WTC11 (cell line): ENCODE measurements at regions of chr16 and their contacts with region 1.

Region 1: GRCh38 chr16:68528686-68529379 is 10.3 kb upstream of the ZFP90 start:
- DNase-seq: peak; percentile 91
- ATAC-seq: peak; percentile 81
- H3K4me3 Mint-ChIP-seq: peak overlapping the region; percentile 78
- H3K27ac Mint-ChIP-seq: no peak overlapping the region
- H3K4me1 Mint-ChIP-seq: peaks cover 15% of the 10 kb centered on the region
- H3K27me3 Mint-ChIP-seq: peaks cover 50% of the 10 kb centered on the region
- CTCF ChIP-seq: peak; percentile 98

Region 2: GRCh38 chr16:68538880-68539701 is 10.3 kb after region 1 on chr16 and contains the start of gene ZFP90:
- CTCF ChIA-PET with region 1: interaction called, 27 read pairs
- POLR2A ChIA-PET with region 1: interaction called, 5 read pairs
- DNase-seq: peak; percentile 93
- ATAC-seq: peak; percentile 95
- H3K4me3 Mint-ChIP-seq: peak within 1 kb of the TSS; percentile 91
- H3K27ac Mint-ChIP-seq: peak within 1 kb of the TSS; percentile 97
- H3K4me1 Mint-ChIP-seq: peaks cover 12% of the 10 kb centered on the region
- H3K27me3 Mint-ChIP-seq: no peaks in the 10 kb centered on the region; the same call in 1 of the 2 replicates
- CTCF ChIP-seq: no peak
- total RNA-seq, gene ZFP90: 21.7 to 24.9 TPM (median 22.6 TPM) in 3 replicates

Region 3: GRCh38 chr16:68644715-68645493 is 116.1 kb after region 1 on chr16 and contains the start of gene CDH3:
- CTCF ChIA-PET with region 1: interaction called, 16 read pairs
- POLR2A ChIA-PET with region 1: interaction called, 3 read pairs
- DNase-seq: peak; percentile 94
- ATAC-seq: peak; percentile 76
- H3K4me3 Mint-ChIP-seq: peak within 1 kb of the TSS; percentile 89
- H3K27ac Mint-ChIP-seq: peak within 1 kb of the TSS; percentile 96
- H3K4me1 Mint-ChIP-seq: peaks cover 48% of the 10 kb centered on the region
- H3K27me3 Mint-ChIP-seq: peaks cover 25% of the 10 kb centered on the region
- CTCF ChIP-seq: no peak
- total RNA-seq, gene CDH3: 128 to 142 TPM (median 136 TPM) in 3 replicates